H1 (cell line): ENCODE measurements at regions of chr9 and their contacts with region 1.

Region 1: GRCh38 chr9:2824564-2824963 is 19.3 kb downstream of the PUM3 start:
- DNase-seq: peak in 1 of 2 experiments; percentile 73
- H3K4me3 ChIP-seq: no peak overlapping the region
- H3K27ac ChIP-seq: no peak overlapping the region
- H3K4me1 ChIP-seq: no peaks in the 10 kb centered on the region
- H3K27me3 ChIP-seq: no peaks in the 10 kb centered on the region
- CTCF ChIP-seq: peak; percentile 69 to 93 (median 86)
- EP300 ChIP-seq: no peak
- POLR2A ChIP-seq: no peak
- RAD21 ChIP-seq: peak; percentile 74 to 78

Region 2: DNA sequence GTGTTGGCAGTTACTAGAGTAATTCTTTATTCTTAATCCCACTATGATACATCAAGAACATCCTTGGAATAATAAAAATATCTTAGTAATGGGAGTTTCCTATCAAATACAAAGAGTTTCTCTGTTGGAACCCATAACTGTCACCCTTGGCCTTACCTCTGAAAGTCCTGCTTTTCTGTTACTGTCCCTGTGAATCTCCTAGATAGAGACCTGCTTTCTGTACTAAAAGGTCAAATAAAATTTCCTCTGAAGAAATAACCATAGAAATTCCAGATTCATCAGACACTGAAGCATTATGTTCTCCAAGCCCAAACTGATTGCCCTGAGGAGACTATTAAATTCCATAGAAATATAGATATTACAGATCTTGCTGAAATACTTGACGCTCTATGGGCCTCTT is 44.2 kb before region 1 on chr9:
- CTCF ChIA-PET with region 1: no interaction called
- POLR2A ChIA-PET with region 1: no interaction called
- DNase-seq: no peak
- H3K4me3 ChIP-seq: no peak overlapping the region
- H3K27ac ChIP-seq: no peak overlapping the region
- H3K4me1 ChIP-seq: no peaks in the 10 kb centered on the region
- H3K27me3 ChIP-seq: peaks cover 0 to 1% (median 0%) of the 10 kb centered on the region in 4 experiments; a peak in 1 of 7 replicates
- CTCF ChIP-seq: no peak
- EP300 ChIP-seq: no peak
- POLR2A ChIP-seq: no peak
- RAD21 ChIP-seq: no peak

Region 3: DNA sequence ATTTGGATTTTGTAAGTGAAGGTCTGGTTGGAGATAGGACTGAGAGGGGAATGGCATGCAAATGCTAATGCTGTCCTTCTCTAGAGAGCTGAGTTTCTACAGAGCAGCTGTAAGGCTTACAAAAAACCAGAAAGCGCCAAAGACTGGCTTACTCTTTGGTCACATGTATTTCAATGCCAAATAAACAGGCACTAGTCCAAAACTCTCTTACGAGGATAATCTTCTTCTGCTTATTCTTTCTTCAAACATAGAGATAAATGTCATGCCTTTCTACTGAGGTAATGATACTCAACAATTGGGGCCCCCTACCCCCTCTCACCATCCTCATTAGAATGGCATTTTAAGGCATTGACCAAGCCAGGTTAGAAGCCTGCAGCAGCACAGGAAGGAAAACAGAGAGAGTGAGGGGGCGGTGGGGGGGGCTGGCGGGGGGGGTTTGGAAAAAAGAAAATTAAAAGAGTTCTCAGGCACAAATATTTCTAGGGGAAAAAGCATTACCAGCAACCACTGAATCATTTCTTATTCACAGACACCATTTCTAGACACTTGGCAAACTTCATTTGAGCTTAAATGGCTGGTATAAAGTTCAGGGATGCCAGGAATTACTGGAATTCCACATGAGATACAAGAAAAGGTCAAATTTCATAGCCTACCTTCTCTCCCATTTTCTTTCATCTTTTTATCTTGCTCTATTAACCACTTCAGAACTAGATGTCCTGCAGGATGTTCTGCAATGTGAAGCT is 14.7 kb before region 1 on chr9:
- CTCF ChIA-PET with region 1: interaction called, 53 read pairs
- POLR2A ChIA-PET with region 1: interaction called, 8 read pairs
- DNase-seq: peak in 1 of 2 experiments; percentile 57
- H3K4me3 ChIP-seq: peak overlapping the region in 1 of 4 experiments; percentile 38; a peak in 3 of 8 replicates
- H3K27ac ChIP-seq: peak overlapping the region; percentile 84
- H3K4me1 ChIP-seq: peaks cover 10 to 43% (median 32%) of the 10 kb centered on the region in 4 experiments
- H3K27me3 ChIP-seq: no peaks in the 10 kb centered on the region
- CTCF ChIP-seq: no peak
- EP300 ChIP-seq: no peak
- POLR2A ChIP-seq: peak in 1 of 2 experiments; percentile 33; a peak in 1 of 3 replicates
- RAD21 ChIP-seq: no peak

Region 4: DNA sequence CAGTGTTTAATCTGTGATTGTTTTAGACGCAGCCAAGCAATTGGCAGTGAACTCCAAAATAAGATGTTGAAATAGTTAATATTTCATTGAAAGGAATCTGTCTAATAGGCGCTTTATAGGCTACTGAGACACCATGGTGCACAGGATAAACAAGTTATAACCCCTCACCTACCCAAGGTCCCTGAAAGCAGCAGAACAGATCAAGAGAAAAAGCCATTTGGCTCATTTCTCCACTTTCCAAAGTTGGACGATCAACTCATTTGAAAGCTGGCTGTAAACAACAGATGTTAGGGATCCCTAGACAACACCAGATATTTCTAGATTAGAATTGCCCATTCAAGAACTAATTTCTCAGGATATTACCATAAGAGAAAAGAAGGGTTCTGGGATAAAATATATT is 14.5 kb after region 1 on chr9:
- CTCF ChIA-PET with region 1: interaction called, 10 read pairs
- POLR2A ChIA-PET with region 1: interaction called, 9 read pairs
- DNase-seq: no peak
- H3K4me3 ChIP-seq: no peak overlapping the region
- H3K27ac ChIP-seq: no peak overlapping the region
- H3K4me1 ChIP-seq: peaks cover 0 to 8% (median 2%) of the 10 kb centered on the region in 4 experiments; a peak in 2 of 7 replicates
- H3K27me3 ChIP-seq: no peaks in the 10 kb centered on the region
- CTCF ChIP-seq: no peak
- EP300 ChIP-seq: no peak
- POLR2A ChIP-seq: no peak
- RAD21 ChIP-seq: no peak

Region 5: GRCh38 chr9:2907411-2907810 is 82.8 kb after region 1 on chr9:
- CTCF ChIA-PET with region 1: no interaction called
- POLR2A ChIA-PET with region 1: no interaction called
- DNase-seq: no peak
- H3K4me3 ChIP-seq: no peak overlapping the region
- H3K27ac ChIP-seq: no peak overlapping the region
- H3K4me1 ChIP-seq: peaks cover 0 to 5% (median 0%) of the 10 kb centered on the region in 4 experiments; a peak in 3 of 7 replicates
- H3K27me3 ChIP-seq: no peaks in the 10 kb centered on the region
- CTCF ChIP-seq: no peak
- EP300 ChIP-seq: no peak
- POLR2A ChIP-seq: no peak
- RAD21 ChIP-seq: no peak

Region 6: DNA sequence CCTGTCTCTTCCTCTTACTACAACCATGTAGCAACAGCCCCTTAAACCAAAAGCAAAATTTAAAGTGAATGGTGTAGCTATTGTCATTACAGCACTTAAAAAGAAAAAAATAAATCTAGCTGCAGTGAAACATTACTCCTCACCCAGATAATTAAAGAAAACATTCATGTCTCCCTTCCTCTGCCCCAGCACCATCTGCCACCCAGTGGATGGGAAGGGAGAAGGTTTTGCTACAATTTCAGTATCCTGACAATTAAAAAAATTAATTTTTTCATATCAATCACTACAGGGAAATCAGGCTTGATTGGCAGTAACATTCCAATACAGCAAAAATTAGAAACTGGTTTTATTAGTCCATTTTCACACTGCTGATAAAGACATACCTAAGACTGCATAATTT is 166.7 kb after region 1 on chr9:
- CTCF ChIA-PET with region 1: no interaction called
- POLR2A ChIA-PET with region 1: no interaction called
- DNase-seq: no peak
- H3K4me3 ChIP-seq: no peak overlapping the region
- H3K27ac ChIP-seq: no peak overlapping the region
- H3K4me1 ChIP-seq: no peaks in the 10 kb centered on the region
- H3K27me3 ChIP-seq: no peaks in the 10 kb centered on the region
- CTCF ChIP-seq: peak in 2 of 3 experiments; percentile 15 to 24; a peak in 2 of 4 replicates
- EP300 ChIP-seq: no peak
- POLR2A ChIP-seq: no peak
- RAD21 ChIP-seq: peak; percentile 48 to 49